ENCODE measurements at regions of chr12 and their contacts with region 1.

Region 1: DNA sequence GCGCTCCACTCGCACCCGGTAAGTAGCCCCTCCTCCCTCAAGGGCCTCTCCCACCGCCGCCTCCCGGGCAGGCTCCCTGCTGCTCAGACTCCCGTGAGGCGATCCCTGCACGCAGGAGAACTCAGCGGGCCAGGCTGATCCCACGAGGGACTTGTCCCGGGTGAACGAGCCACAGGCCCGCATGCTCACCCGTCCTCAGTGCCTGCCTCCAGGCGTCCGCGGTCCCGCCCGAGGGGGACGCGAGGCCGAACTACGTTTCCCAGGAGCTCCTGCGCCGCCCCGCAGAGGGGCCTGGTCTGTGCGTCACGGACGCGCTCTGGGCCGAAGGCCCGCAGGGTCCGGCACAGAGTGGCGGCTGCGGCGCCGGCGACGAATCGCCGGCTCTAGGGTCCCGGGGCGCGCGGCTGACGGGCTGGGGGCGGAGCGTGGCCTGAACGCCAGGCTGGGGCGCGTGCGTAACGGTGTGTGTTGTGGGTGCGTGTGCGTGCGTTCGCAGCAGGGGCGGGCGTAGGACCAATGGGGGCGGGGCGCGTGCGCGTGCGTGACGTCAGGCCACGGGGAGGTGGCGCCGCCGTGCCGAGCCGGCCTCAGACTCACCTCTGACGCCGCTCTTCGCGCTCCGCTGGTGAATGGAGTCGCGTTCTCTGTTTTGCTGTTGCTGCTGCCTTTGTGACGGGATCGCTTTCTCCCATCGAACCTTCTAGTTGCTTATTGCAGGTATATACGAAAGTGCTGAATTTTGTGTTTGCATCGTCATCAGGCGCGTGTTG is at the starts of genes ZNF10 and ZNF891:
- DNase-seq: peak; percentile 95 to 99 (median 96)
- ATAC-seq: peak; percentile 85
- H3K4me3 ChIP-seq: peak within 1 kb of the TSS; percentile 78
- H3K4me3 Mint-ChIP-seq: peak within 1 kb of the TSS; percentile 94
- H3K27ac ChIP-seq: peak within 1 kb of the TSS; percentile 97 to 99
- H3K27ac Mint-ChIP-seq: peak within 1 kb of the TSS; percentile 99
- H3K4me1 ChIP-seq: peaks cover 16% of the 10 kb centered on the region
- H3K4me1 Mint-ChIP-seq: peaks cover 30% of the 10 kb centered on the region
- H3K27me3 ChIP-seq: no peaks in the 10 kb centered on the region
- H3K27me3 Mint-ChIP-seq: no peaks in the 10 kb centered on the region
- CTCF ChIP-seq: no peak
- total RNA-seq, gene ZNF10: 43.3 to 47.8 TPM
- total RNA-seq, gene ZNF891: 4.5 TPM

Region 2: DNA sequence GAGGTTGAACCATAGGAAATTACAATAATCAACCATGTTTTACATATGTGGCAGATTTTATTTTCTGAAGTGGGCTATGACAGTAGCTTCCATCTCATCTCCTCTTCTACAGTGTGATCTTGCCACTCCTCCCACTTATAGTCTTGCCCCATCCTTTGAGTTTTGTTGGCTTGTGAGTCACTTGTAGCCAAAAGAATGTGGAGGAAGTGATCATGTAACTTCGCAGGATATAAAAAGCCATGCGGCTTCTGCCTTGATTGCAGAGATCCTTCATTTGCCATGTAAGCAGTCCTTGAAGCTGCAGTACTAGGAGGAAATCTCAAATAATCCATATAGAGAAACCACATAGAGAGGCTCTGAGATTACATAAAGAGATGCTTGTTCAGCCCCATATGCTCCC is 106.7 kb before region 1 on chr12:
- CTCF ChIA-PET with region 1: no interaction called
- POLR2A ChIA-PET with region 1: no interaction called
- intact Hi-C with region 1: no loop called
- DNase-seq: no peak
- ATAC-seq: no peak
- H3K4me3 ChIP-seq: no peak overlapping the region
- H3K4me3 Mint-ChIP-seq: no peak overlapping the region
- H3K27ac ChIP-seq: no peak overlapping the region
- H3K27ac Mint-ChIP-seq: no peak overlapping the region
- H3K4me1 ChIP-seq: no peaks in the 10 kb centered on the region
- H3K4me1 Mint-ChIP-seq: no peaks in the 10 kb centered on the region
- H3K27me3 ChIP-seq: no peaks in the 10 kb centered on the region
- H3K27me3 Mint-ChIP-seq: no peaks in the 10 kb centered on the region
- CTCF ChIP-seq: no peak

Region 3: DNA sequence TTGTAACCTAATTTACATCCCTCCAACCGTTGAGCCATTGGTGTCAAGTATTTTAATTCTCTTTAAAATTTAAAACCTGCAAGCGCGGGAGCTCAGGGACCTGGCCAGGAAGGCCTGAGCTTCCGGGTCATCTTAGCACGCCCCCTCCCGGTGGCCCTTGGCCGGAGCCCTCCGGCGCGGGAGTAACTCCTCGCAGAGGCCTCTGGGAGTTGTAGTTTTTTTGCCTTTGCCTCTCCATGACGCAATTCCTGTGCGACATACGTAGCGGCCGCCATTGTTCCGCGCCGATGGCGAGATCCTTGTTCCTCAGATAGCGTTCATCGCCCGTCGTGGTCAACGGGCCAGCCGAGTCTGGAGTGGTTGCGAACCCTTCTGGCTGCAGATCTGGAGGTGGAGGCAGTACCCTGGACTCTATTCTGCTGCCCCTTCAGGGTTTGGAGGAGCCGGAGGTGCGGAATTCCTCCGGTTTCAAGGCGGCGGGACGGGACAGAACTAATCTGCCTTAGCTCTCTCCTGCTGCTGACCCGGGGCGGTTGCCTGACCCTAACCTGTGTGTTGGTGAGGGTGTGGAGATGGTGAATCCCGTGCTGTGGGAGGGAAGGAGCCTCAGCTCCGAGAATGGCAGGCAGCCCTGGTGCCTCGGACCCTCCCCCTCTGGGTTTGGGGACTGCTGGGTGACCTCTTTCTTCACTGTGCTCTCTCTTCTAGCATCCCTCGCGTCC is 51.2 kb after region 1 on chr12 and contains the start of gene ZNF268:
- CTCF ChIA-PET with region 1: interaction called, 9 read pairs
- POLR2A ChIA-PET with region 1: interaction called, 14 read pairs
- intact Hi-C with region 1: loop called (anchors 2 kb)
- DNase-seq: peak; percentile 77 to 93 (median 82)
- ATAC-seq: peak; percentile 89
- H3K4me3 ChIP-seq: peak within 1 kb of the TSS; percentile 75
- H3K4me3 Mint-ChIP-seq: peak within 1 kb of the TSS; percentile 96
- H3K27ac ChIP-seq: peak within 1 kb of the TSS; percentile 65 to 73
- H3K27ac Mint-ChIP-seq: peak within 1 kb of the TSS; percentile 90
- H3K4me1 ChIP-seq: peaks cover 14% of the 10 kb centered on the region
- H3K4me1 Mint-ChIP-seq: peaks cover 38% of the 10 kb centered on the region
- H3K27me3 ChIP-seq: no peaks in the 10 kb centered on the region
- H3K27me3 Mint-ChIP-seq: no peaks in the 10 kb centered on the region
- CTCF ChIP-seq: peak; percentile 59
- total RNA-seq, gene ZNF268: 15.1 to 17.6 TPM